Lower leg skin (tissue), 4 donors: ENCODE measurements at regions of chr11 and their contacts with region 1.

Region 1: DNA sequence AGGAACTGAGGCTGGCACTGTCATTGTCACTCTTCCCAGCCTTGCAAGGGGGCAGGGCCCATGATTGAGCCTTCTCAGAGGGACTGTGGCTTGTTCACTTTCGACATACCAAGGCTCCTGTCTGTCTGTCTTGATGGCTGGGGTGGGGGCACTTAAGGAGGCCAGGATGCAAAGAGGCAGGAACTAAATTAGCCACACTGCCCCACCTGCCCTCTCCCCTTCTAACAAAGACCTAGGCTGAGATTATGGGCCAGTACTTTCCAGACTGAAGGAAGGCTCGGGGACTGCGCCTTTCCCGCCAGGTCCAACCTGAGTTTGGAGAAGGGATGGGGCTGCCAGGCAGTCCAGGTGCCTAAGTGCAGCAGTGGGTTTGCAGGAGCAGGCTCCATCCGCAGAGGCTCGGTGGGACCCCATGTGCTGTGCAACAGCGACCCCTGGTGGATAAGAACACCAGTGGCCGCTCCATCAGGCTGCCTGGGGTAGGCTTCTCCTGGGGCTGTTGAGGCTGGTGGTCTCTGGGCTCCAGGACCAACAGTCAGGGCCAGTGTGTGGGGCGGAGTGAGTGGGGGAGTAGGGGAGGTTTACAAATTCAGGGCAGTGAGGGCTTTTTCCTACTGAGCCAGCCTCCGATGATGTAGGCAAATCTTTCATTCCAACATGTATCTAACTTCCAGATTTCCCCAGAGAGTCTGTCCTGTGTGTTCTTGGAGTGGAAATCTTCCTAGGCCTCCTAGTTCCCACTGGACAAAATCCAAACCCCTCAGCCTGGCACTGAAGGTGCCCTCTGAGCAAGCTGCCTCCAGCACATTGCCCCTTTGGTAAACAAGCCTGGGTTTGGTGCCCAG is 93.9 kb downstream of the INSC start:
- DNase-seq: peak; percentile 33 to 91
- H3K4me3 ChIP-seq: no peak overlapping the region
- CTCF ChIP-seq: no peak
- POLR2A ChIP-seq: no peak

Region 2: DNA sequence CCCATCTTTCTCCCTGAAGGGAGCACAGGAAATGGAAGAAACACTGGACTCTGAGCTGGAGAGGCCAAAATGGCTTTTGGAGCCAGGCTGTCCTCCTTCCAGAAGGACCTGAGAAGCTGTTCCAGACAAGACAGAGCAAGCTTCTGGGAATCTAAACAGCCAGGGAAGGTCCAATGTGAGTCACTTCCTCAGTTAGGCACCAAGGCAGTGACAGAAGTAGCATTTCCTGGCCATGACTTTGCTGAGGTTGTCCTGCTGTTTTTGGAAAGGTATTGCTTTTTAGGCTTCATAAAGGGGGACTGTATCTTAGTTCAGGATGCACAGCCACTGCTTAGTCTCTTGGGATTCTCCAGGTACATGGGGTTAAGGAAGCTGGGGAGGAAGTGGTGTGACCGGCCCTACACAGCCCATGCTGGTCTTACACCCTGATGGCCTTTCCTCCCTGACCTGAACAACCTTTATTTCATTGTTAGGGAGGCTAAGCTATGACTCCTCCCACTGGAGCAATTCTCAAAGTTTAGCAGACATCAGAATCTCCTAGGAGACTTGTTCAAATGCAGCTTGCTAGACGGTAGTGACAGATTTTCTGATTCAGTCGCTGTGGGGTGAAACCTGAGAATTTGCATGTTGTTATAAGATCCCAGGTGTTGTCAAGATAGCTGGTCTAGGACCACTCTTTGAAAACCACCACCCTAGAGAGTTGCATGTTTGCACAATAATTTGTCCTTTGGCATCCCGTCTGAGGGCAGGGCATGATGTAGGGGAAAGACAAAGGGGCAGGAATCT is 100.7 kb before region 1 on chr11:
- intact Hi-C with region 1: loop called (anchors 5 kb)
- DNase-seq: no peak
- H3K4me3 ChIP-seq: no peak overlapping the region
- CTCF ChIP-seq: no peak
- POLR2A ChIP-seq: no peak